ENCODE measurements at regions of chr6 and their contacts with region 1.

Region 1: GRCh38 chr6:129498950-129499842 is 210.8 kb downstream of the ARHGAP18 start:
- DNase-seq: peak; percentile 82
- H3K4me3 Mint-ChIP-seq: peak overlapping the region; percentile 56
- H3K27ac Mint-ChIP-seq: peak overlapping the region; percentile 73
- H3K4me1 Mint-ChIP-seq: peaks cover 36% of the 10 kb centered on the region
- H3K27me3 Mint-ChIP-seq: no peaks in the 10 kb centered on the region
- CTCF ChIP-seq: peak; percentile 63

Region 2: GRCh38 chr6:129454488-129454887 is 44.7 kb before region 1 on chr6:
- CTCF ChIA-PET with region 1: no interaction called
- POLR2A ChIA-PET with region 1: no interaction called
- intact Hi-C with region 1: no loop called
- DNase-seq: no peak
- H3K4me3 Mint-ChIP-seq: no peak overlapping the region
- H3K27ac Mint-ChIP-seq: no peak overlapping the region
- H3K4me1 Mint-ChIP-seq: no peaks in the 10 kb centered on the region
- H3K27me3 Mint-ChIP-seq: no peaks in the 10 kb centered on the region
- CTCF ChIP-seq: no peak

Region 3: GRCh38 chr6:129517291-129517690 is 18.1 kb after region 1 on chr6:
- CTCF ChIA-PET with region 1: interaction called, 5 read pairs
- POLR2A ChIA-PET with region 1: interaction called, 12 read pairs
- intact Hi-C with region 1: no loop called
- DNase-seq: no peak
- H3K4me3 Mint-ChIP-seq: no peak overlapping the region
- H3K27ac Mint-ChIP-seq: no peak overlapping the region
- H3K4me1 Mint-ChIP-seq: no peaks in the 10 kb centered on the region
- H3K27me3 Mint-ChIP-seq: no peaks in the 10 kb centered on the region
- CTCF ChIP-seq: no peak

Region 4: DNA sequence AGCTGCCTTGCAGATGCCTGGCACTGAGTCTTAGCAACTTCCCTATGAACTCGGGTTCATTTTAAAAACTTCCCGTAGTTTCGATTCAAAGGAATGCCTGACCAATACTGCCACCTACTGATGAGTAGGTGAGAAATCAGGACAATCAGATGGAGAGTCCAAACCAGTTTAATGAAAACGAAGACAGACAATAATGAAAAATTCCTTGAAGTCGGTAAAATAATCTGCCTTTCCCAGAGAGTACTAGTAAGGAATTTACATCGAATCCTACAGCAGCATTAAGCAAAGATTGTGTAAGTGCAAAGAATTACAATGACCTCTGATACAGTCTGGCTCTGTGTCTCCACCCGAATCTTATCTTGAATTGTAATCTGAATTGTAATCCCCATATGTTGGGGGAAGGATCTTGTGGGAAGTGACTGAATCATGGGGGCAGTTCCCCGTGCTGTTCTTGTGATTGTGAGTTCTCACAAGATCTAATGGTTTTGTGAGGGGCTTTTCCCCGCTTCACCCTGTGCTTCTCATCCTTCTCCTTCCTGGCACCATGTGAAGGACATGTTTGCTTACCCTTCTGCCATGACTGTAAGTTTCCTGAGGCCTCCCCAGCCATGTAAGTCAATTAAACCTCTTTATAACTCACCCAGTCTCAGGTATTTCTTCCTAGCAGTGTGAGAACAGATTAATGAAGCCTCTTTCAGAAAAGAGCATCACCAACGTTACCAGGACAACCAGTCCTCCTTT is 76.4 kb after region 1 on chr6:
- CTCF ChIA-PET with region 1: interaction called, 111 read pairs
- POLR2A ChIA-PET with region 1: interaction called, 9 read pairs
- intact Hi-C with region 1: loop called (anchors 1 kb)
- DNase-seq: peak; percentile 68
- H3K4me3 Mint-ChIP-seq: no peak overlapping the region
- H3K27ac Mint-ChIP-seq: peak overlapping the region; percentile 36
- H3K4me1 Mint-ChIP-seq: no peaks in the 10 kb centered on the region
- H3K27me3 Mint-ChIP-seq: no peaks in the 10 kb centered on the region
- CTCF ChIP-seq: peak; percentile 77

Region 5: DNA sequence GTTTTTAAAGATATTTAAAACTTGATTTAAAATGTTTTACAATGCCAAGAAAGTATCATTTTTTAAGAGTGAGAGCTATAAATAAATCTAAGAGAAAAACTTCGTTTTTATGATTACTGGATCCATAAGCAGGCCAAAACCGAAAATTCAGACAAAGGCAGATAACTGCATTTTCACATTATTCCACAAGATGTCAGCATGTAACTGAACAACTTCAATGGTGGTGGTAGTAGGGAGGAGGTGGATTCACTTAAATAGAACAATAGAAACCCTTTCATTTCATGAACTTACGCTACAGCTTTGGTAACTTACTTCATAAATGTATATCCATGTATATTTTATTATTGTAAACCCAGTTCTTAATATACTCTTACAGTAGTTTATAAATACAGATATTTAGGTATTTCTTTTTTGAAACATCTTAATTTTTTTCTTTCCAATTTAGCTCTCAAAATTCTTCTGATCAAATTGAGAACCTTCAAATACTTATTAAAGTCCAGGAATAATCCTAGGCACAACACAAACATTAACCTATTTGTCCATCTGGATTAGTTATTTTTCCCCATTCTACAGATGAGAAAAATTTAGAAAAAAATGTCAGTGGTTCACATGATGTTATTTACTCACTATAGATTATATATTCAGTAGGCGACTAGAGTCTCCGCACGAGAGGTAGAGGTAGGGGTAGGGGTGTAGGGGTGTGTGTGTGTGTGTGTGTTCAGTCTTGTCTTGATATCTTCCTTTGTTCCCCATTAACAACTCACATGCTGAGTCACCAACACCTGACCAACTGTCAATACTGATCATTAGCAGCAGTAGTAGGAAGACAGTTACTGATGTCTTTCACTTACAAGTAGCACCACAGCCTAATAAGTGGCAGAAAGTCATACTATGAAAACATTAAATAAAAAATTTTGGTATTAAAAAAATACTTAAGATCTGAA is 99.3 kb after region 1 on chr6:
- CTCF ChIA-PET with region 1: interaction called, 52 read pairs
- POLR2A ChIA-PET with region 1: interaction called, 7 read pairs
- intact Hi-C with region 1: loop called (anchors 1 kb)
- DNase-seq: peak; percentile 77
- H3K4me3 Mint-ChIP-seq: no peak overlapping the region
- H3K27ac Mint-ChIP-seq: no peak overlapping the region
- H3K4me1 Mint-ChIP-seq: no peaks in the 10 kb centered on the region
- H3K27me3 Mint-ChIP-seq: no peaks in the 10 kb centered on the region
- CTCF ChIP-seq: peak; percentile 71

Region 6: DNA sequence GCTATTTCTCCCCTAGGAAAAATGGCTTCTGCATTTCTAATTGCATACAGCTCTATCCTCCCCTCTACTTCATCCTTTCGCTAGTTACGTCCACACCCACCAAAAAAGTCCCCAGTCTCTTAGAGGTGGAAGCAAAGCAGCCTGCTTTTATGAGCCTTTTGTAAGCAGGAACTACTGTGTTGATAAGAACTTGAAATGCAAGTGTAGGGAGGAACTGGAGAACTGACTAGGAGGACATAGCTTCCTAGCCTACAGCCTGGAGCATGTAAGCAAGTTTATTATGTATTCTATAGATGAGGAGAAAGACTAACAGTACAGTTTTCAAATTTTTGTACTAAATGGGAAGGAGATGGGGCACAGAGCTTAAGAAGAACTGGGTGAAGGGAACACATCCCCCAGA is 200.5 kb after region 1 on chr6:
- CTCF ChIA-PET with region 1: no interaction called
- POLR2A ChIA-PET with region 1: no interaction called
- intact Hi-C with region 1: no loop called
- DNase-seq: no peak
- H3K4me3 Mint-ChIP-seq: no peak overlapping the region
- H3K27ac Mint-ChIP-seq: peak overlapping the region; percentile 85
- H3K4me1 Mint-ChIP-seq: peaks cover 48% of the 10 kb centered on the region
- H3K27me3 Mint-ChIP-seq: no peaks in the 10 kb centered on the region
- CTCF ChIP-seq: no peak

Region 7: DNA sequence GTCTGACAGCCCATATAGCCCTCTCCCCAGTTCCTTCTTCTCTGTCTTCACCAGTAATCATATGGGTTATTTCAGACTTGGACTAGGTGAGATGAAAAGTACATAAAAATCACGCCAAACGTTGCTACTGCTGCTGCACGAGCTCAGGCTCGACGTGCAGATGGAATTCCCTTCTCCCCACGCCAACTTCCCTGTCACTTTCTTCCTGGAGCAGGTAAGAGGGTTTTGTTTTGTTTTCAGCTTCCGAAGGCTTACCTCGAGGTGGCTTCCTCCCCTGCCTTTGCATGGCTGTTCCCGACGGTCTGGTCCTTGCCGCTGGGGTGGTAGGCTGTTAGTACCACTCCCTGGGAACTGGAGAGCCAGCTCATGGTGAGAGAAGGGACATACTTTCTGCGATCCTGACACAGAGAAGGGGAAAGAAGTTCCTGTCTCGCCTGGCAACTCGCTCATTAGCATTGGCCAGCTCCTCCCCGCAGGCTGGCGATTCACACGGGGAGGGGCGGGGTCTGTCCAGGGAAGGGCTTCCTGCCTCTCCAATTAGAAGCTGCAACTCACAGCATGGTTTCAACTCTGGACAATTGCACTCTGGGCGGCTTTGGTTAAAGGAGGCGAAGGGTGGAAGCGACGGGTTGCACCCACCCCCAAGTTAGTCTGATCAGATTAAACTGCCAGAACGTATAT is 210.7 kb after region 1 on chr6 and contains the start of gene ARHGAP18:
- CTCF ChIA-PET with region 1: interaction called, 5 read pairs
- POLR2A ChIA-PET with region 1: interaction called, 11 read pairs
- intact Hi-C with region 1: no loop called
- DNase-seq: peak; percentile 96
- H3K4me3 Mint-ChIP-seq: peak within 1 kb of the TSS; percentile 84
- H3K27ac Mint-ChIP-seq: peak within 1 kb of the TSS; percentile 79
- H3K4me1 Mint-ChIP-seq: peaks cover 12% of the 10 kb centered on the region
- H3K27me3 Mint-ChIP-seq: no peaks in the 10 kb centered on the region
- CTCF ChIP-seq: no peak
- total RNA-seq, gene ARHGAP18: 14.6 and 22.9 TPM in 2 replicates

Region 8: DNA sequence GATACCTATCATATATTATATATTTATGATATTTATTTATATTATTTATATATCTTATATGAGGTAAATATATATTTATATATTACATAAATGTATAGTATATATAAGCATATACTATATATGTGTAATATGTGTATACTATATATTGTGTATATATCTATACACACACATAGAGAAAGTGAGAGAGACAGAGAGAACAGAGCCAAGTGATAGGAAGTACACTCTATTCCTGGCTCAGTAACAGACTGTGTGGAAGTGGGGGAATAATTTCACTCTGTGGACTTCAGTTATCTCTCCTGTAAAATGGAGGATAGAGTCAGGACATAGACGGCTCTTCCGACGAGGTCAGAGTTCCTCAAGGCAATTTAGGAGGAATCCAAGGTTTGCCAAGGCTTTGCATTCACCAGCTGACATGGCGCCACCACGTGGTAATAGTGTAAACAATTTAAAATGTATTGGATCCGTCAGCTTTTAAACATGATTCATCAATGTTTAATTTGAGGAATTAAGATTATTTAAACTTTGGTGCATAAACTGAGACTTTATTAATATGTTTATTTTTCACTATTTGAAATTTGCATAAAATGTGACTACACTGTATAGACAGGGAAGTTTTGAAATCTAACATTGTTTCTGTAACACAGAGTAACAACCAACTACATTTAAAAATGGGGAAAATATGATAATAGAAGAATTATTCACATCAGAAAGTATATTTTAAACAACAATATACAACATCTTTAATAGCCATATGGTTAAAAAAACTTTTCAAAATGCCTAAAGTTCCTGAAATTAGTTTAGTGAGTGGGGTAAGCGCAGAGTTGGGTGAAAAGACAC is 437.4 kb after region 1 on chr6:
- CTCF ChIA-PET with region 1: no interaction called
- POLR2A ChIA-PET with region 1: no interaction called
- intact Hi-C with region 1: loop called (anchors 5 kb)
- DNase-seq: peak; percentile 90
- H3K4me3 Mint-ChIP-seq: peak overlapping the region; percentile 41
- H3K27ac Mint-ChIP-seq: no peak overlapping the region
- H3K4me1 Mint-ChIP-seq: no peaks in the 10 kb centered on the region
- H3K27me3 Mint-ChIP-seq: no peaks in the 10 kb centered on the region
- CTCF ChIP-seq: peak; percentile 53

Measured in MCF 10A (cell line).